Transverse colon (tissue), 4 donors: ENCODE measurements at regions of chr17 and their contacts with region 1.

Region 1: DNA sequence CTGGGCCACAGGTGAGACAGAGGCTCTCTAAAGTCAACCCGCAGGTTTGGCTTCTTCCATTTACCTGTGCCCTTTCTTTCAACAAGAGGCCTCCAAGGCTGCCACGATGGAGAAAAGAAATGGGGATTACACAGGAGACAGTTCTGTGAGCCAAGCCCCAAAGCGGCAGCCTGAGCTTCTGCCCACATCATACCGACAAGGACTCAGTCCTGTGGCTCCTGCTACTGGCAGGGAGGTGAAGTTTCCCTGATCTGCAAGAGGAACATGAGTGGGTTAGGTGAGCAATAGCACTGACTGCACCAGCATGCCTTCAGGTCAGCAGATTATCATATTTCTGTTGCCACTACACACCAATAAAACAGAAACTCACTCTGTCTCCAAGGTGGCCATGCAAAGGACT is 800.0 kb downstream of the KCNJ18 start:
- DNase-seq: no peak
- H3K4me3 ChIP-seq: no peak overlapping the region
- H3K27ac ChIP-seq: no peak overlapping the region
- H3K4me1 ChIP-seq: no peaks in the 10 kb centered on the region
- H3K27me3 ChIP-seq: no peaks in the 10 kb centered on the region
- CTCF ChIP-seq: no peak
- EP300 ChIP-seq: no peak
- POLR2A ChIP-seq: no peak

Region 2: GRCh38 chr17:22599322-22599721 is 107.0 kb after region 1 on chr17:
- in situ Hi-C with region 1: loop called in 1 of 4 experiments (anchors 25 kb)
- intact Hi-C with region 1: no loop called
- DNase-seq: no peak
- H3K4me3 ChIP-seq: no peak overlapping the region
- H3K27ac ChIP-seq: no peak overlapping the region
- H3K4me1 ChIP-seq: no peaks in the 10 kb centered on the region
- H3K27me3 ChIP-seq: no peaks in the 10 kb centered on the region
- CTCF ChIP-seq: no peak
- EP300 ChIP-seq: no peak
- POLR2A ChIP-seq: no peak